ENCODE measurements at regions of chr22 and their contacts with region 1.

Region 1: GRCh38 chr22:30634471-30635233 is 929 bp upstream of the SLC35E4 start:
- DNase-seq: peak; percentile 83 to 85 (median 85)
- ATAC-seq: peak; percentile 72 to 79 (median 76)
- H3K4me3 ChIP-seq: peak overlapping the region in 1 of 3 donors; percentile 59
- H3K27ac ChIP-seq: peak overlapping the region; percentile 44 to 68 (median 63)
- H3K4me1 ChIP-seq: peaks cover 0 to 17% (median 8%) of the 10 kb centered on the region in 4 donors
- H3K27me3 ChIP-seq: no peaks in the 10 kb centered on the region
- CTCF ChIP-seq: peak; percentile 91 to 97 (median 94)
- POLR2A ChIP-seq: no peak

Region 2: DNA sequence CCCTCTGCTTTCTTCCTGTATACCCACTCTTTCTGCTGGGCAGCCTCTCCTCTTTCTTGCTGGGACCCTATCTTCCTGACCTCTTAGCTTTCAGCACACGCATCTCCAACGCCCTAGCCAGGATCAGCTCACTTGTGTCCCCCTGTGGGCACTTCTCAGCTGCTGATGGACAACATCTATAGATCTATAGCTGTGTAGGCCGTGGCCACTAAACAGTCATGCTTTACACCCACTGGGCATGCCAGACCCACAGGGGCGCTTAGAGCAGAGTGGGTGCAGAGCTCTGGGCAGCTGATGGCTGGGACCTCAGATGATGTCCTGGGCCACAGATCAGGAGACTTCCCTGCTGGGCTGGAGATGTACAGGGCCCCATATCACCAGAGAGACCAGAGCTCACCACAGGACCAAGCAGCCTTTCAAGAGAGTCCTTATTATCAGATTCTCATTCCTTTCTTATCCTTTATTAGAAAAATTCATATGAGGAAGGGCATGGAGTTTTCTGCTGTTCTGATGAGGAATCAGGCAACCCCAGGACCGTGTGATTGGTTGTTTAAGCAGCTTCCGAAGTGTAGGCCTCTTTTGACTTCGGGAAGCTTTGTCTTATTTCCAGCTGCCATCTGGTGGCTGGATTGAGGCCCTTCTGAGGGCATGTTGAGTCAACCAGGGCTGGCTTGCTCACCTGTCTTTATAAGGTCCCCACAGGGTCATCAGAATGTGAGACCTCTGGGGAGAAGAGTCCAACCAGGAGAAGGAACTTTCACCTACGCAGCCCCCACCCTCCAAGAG is 120.5 kb after region 1 on chr22:
- intact Hi-C with region 1: loop called in 1 of 2 experiments (anchors 10 kb)
- DNase-seq: peak; percentile 49 to 57 (median 54)
- ATAC-seq: peak; percentile 78 to 93 (median 84)
- H3K4me3 ChIP-seq: no peak overlapping the region
- H3K27ac ChIP-seq: no peak overlapping the region
- H3K4me1 ChIP-seq: no peaks in the 10 kb centered on the region
- H3K27me3 ChIP-seq: no peaks in the 10 kb centered on the region
- CTCF ChIP-seq: peak; percentile 54 to 71 (median 64)
- POLR2A ChIP-seq: no peak